K562 (cell line): ENCODE measurements at regions of chr9 and their contacts with region 1.

Region 1: GRCh38 chr9:127586537-127586936 is 25.5 kb upstream of the STXBP1 start:
- DNase-seq: peak; percentile 63 to 83 (median 70)
- ATAC-seq: peak; percentile 96
- H3K4me3 ChIP-seq: no peak overlapping the region
- H3K27ac ChIP-seq: no peak overlapping the region
- H3K4me1 ChIP-seq: peaks cover 0 to 5% of the 10 kb centered on the region in 2 experiments; a peak in 2 of 5 replicates
- H3K27me3 ChIP-seq: no peaks in the 10 kb centered on the region
- CTCF ChIP-seq: peak; percentile 90 to 97 (median 92)
- EP300 ChIP-seq: no peak
- POLR2A ChIP-seq: no peak
- RAD21 ChIP-seq: peak; percentile 90 to 99

Region 2: DNA sequence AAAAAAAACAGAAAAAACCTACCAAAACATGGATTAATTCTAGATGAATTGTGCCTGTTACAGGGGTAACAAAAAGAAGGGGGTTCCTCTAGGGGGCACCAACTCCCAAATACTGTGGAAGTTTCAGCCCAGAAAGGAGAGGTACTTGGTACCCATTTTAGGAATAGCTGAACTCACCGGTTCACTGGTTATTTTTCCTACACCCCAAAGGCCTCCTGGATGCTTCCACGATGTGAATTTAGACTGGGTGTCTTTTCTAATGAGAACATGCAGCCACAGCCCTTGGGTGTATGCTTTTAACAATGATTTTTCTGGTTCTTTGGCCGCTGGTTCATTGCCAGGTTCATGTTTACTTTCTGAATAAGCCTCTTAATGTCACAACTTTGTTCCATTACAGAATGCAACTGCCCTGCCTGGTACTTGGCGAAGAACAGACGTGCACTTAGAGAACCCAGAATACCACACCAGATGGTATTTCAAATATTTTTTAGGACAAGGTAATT is 275.2 kb before region 1 on chr9:
- CTCF ChIA-PET with region 1: interaction called, 4 read pairs
- POLR2A ChIA-PET with region 1: no interaction called
- in situ Hi-C with region 1: no loop called
- intact Hi-C with region 1: loop called (anchors 5 kb)
- DNase-seq: peak; percentile 25 to 45 (median 38)
- ATAC-seq: peak; percentile 65; the same call in 1 of the 3 replicates
- H3K4me3 ChIP-seq: no peak overlapping the region
- H3K27ac ChIP-seq: no peak overlapping the region
- H3K4me1 ChIP-seq: no peaks in the 10 kb centered on the region; a peak in 1 of 5 replicates
- H3K27me3 ChIP-seq: peaks cover 0 to 4% of the 10 kb centered on the region in 2 experiments; a peak in 1 of 5 replicates
- CTCF ChIP-seq: peak; percentile 36 to 66 (median 58); a peak in 5 of 6 replicates
- EP300 ChIP-seq: no peak
- POLR2A ChIP-seq: no peak
- RAD21 ChIP-seq: peak; percentile 30 to 42; a peak in 3 of 4 replicates

Region 3: GRCh38 chr9:127503947-127504782 is 82.4 kb before region 1 on chr9:
- CTCF ChIA-PET with region 1: interaction called, 50 read pairs
- POLR2A ChIA-PET with region 1: interaction called, 6 read pairs
- in situ Hi-C with region 1: loop called (anchors 5 kb)
- intact Hi-C with region 1: loop called (anchors 1 kb)
- DNase-seq: peak; percentile 68 to 87 (median 76)
- ATAC-seq: peak; percentile 94
- H3K4me3 ChIP-seq: no peak overlapping the region
- H3K27ac ChIP-seq: no peak overlapping the region
- H3K4me1 ChIP-seq: peaks cover 14 to 62% of the 10 kb centered on the region in 2 experiments
- H3K27me3 ChIP-seq: no peaks in the 10 kb centered on the region
- CTCF ChIP-seq: peak; percentile 92 to 94 (median 93)
- EP300 ChIP-seq: no peak
- POLR2A ChIP-seq: no peak
- RAD21 ChIP-seq: peak; percentile 90 to 95

Region 4: DNA sequence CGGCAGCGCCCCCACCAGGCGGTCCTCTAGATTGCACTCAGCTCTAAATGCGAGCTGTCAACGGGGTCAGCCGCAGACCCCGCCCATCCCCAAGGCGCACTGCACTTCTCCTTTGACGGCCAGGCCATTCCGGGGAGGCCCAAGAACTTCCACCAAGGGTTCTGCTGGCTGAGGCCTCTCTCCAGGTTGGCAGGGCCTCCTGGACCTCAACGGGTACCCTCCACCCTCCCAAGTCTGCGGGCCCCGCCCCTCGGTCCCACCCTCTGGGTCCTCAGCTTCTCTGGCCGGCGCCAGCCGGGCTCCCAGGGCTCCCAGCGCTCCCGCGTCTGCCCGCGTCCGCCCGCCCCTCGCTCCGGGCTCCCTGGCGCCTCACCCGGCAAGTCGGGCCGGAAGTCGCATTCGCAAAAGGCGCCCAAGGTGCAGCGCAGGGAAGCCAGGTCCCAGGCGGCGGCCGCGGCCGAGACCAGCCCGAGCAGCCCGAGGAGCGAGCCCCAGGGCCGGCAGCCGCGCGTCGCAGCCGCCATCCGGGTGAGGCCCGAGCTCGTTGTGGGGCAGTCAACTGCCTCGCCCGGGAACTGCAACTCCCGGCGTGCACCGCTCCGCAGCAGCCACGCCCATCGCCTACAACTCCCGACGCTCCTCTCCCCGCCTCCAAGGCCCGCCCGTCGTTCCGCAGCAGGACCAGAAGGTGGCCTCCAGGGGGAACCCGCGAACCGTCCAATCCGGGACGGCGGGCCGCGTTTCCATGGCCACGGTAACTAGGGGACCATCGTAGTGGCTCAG is 148.4 kb after region 1 on chr9 and contains the start of gene TOR2A:
- CTCF ChIA-PET with region 1: interaction called, 49 read pairs
- POLR2A ChIA-PET with region 1: no interaction called
- in situ Hi-C with region 1: loop called (anchors 10 kb)
- intact Hi-C with region 1: loop called (anchors 1 kb)
- DNase-seq: peak; percentile 95 to 98 (median 97)
- ATAC-seq: peak; percentile 98
- H3K4me3 ChIP-seq: peak within 1 kb of the TSS; percentile 74
- H3K27ac ChIP-seq: peak within 1 kb of the TSS; percentile 87
- H3K4me1 ChIP-seq: peaks cover 7 to 43% of the 10 kb centered on the region in 2 experiments; a peak in 4 of 5 replicates
- H3K27me3 ChIP-seq: no peaks in the 10 kb centered on the region
- CTCF ChIP-seq: peak; percentile 96 to 98 (median 98)
- EP300 ChIP-seq: no peak
- POLR2A ChIP-seq: peak; percentile 79
- RAD21 ChIP-seq: peak; percentile 98 to 99
- polyA plus RNA-seq, gene TOR2A: 0.80 to 1.1 TPM

Region 5: GRCh38 chr9:127916665-127917613 is 330.4 kb after region 1 on chr9 and contains the start of gene ST6GALNAC4:
- CTCF ChIA-PET with region 1: interaction called, 8 read pairs
- POLR2A ChIA-PET with region 1: interaction called, 3 read pairs
- in situ Hi-C with region 1: loop called (anchors 5 kb)
- intact Hi-C with region 1: loop called (anchors 5 kb)
- DNase-seq: peak; percentile 94 to 98 (median 97)
- ATAC-seq: peak; percentile 94
- H3K4me3 ChIP-seq: peak within 1 kb of the TSS; percentile 70
- H3K27ac ChIP-seq: peak within 1 kb of the TSS; percentile 40
- H3K4me1 ChIP-seq: peaks cover 38 to 62% of the 10 kb centered on the region in 2 experiments
- H3K27me3 ChIP-seq: no peaks in the 10 kb centered on the region
- CTCF ChIP-seq: no peak
- EP300 ChIP-seq: no peak
- POLR2A ChIP-seq: peak; percentile 67
- RAD21 ChIP-seq: no peak
- polyA plus RNA-seq, gene ST6GALNAC4: 2.6 to 3.4 TPM